Ascending aorta (tissue), 2 donors: ENCODE measurements at regions of chr11 and their contacts with region 1.

Region 1: DNA sequence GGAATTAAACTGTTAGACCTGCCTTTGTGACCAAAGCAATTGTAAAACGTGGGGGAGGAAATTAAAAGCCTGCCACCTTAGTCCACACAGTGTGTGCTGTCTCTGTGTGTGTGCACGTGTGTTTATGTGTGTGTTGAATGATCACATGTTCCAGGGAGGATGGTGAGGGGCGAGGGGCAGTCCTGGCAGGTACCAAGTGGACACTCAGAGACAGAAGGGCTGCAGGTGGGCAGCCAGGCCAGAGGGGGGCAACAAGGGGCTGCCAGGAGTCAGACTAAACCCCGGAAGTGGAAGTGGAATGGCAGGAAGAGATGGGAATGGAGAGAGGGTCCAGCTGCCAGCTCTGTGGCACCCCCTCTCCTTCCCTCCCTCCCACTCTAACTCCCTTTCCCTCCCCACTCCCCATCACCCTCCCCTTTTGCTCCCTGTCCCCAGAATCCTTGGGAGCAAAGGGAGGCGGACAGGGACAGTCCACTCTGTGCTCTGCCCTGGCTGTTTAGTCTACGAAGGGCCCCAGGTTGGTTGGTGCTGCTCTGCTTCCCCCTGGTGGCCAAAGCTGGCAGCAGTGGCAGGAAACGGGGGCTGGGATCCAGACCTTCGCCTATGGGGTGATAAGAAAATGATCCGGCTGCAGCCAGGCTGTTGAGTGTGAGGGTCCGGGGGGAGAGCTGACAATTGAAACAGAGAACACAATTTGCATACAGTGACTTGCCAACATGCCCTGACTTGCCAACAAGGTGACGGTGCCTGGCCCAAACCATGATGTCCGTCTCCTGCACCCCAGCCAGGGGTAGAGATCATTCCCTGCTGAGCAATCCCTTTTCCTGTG is 24.4 kb downstream of the P2RY2 start:
- DNase-seq: peak; percentile 47 to 87
- H3K4me3 ChIP-seq: peak overlapping the region in 1 of 2 donors; percentile 43
- H3K27ac ChIP-seq: peak overlapping the region in 1 of 2 donors; percentile 37
- H3K4me1 ChIP-seq: peaks cover 5 to 16% of the 10 kb centered on the region in 2 donors
- H3K27me3 ChIP-seq: no peaks in the 10 kb centered on the region
- CTCF ChIP-seq: peak; percentile 90 to 94 (median 91)

Region 2: GRCh38 chr11:72831513-72832300 is 410.8 kb before region 1 on chr11:
- intact Hi-C with region 1: loop called (anchors 1 kb)
- DNase-seq: peak in 1 of 2 donors; percentile 94
- H3K4me3 ChIP-seq: no peak overlapping the region
- H3K27ac ChIP-seq: peak overlapping the region; percentile 97 to 99
- H3K4me1 ChIP-seq: peaks cover 23 to 50% of the 10 kb centered on the region in 2 donors
- H3K27me3 ChIP-seq: no peaks in the 10 kb centered on the region
- CTCF ChIP-seq: peak; percentile 93 to 98 (median 93)

Region 3: GRCh38 chr11:72924568-72925190 is 317.8 kb before region 1 on chr11:
- intact Hi-C with region 1: loop called (anchors 1 kb)
- DNase-seq: no peak
- H3K4me3 ChIP-seq: no peak overlapping the region
- H3K27ac ChIP-seq: no peak overlapping the region
- H3K4me1 ChIP-seq: peaks cover 0 to 13% of the 10 kb centered on the region in 2 donors
- H3K27me3 ChIP-seq: no peaks in the 10 kb centered on the region
- CTCF ChIP-seq: peak; percentile 31 to 54 (median 37)

Region 4: GRCh38 chr11:73184953-73185671 is 57.4 kb before region 1 on chr11:
- intact Hi-C with region 1: loop called (anchors 1 kb)
- DNase-seq: peak in 1 of 2 donors; percentile 83
- H3K4me3 ChIP-seq: peak overlapping the region in 1 of 2 donors; percentile 11
- H3K27ac ChIP-seq: peak overlapping the region; percentile 69 to 77
- H3K4me1 ChIP-seq: peaks cover 16 to 18% of the 10 kb centered on the region in 2 donors
- H3K27me3 ChIP-seq: no peaks in the 10 kb centered on the region
- CTCF ChIP-seq: peak; percentile 82 to 84 (median 84)

Region 5: DNA sequence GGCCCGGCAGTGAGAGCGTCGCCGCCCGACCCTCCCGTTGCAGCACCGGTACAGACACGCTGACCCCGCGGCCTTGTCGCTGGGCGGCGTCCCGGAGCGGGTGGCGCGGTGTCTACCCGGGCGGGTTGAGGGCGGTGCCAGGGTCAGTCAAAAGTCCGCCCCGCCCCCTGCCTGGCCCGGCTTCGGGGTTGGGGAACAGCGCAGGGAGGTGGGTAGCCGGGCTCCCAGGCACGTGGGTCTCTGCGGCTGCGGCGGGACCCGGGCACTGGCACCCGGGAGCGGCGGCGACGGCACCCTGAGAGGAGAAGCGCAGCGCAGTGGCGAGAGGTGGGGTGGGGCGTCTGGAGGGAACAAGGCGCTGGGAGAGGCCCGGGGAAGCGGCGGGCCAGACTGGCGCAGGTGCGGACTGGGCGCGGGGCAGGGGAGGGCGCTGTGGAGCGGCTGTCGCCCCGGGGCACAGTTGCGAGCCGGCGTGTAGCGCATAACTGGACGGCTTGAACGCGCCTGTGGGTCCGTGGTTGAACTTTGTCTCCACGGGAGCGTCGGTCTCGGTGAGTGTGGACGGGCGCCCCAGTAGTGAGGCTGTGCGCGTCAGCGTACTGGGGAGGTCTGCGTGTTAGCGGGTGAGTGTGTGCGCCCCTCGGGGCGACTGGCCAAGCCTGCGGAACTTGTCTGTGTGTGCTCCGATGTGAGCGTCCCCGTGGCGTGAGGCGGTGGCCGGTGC is 24.2 kb before region 1 on chr11 and contains the start of gene P2RY2:
- intact Hi-C with region 1: loop called (anchors 2 kb)
- DNase-seq: peak; percentile 22 to 86
- H3K4me3 ChIP-seq: peak within 1 kb of the TSS; percentile 52 to 71
- H3K27ac ChIP-seq: peak within 1 kb of the TSS in 1 of 2 donors; percentile 11
- H3K4me1 ChIP-seq: peaks cover 2 to 3% of the 10 kb centered on the region in 2 donors
- H3K27me3 ChIP-seq: no peaks in the 10 kb centered on the region
- CTCF ChIP-seq: peak; percentile 66 to 74 (median 69)
- total RNA-seq, gene P2RY2: 18.3 TPM

Region 6: DNA sequence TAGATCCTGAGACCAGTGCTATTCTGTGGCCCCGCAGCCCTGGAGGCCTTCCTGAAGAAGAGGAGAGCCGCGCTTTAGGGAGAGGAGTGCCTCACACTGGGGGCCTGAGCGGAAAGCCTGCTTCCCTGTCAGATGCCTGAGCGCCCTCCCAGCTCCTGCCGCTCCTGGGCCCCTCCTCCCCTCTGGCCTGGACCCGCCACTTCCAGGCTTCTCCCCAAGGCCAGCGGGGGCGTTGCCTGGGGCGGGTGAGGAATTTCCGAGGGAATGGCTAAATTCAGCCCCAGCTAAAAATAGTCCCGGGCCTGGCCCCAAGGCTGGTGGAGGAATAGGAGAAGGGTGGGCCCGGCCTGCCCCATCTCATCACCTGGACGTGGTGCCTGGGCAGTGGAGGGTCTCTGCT is 81.0 kb after region 1 on chr11:
- intact Hi-C with region 1: no loop called
- DNase-seq: peak; percentile 72 to 98
- H3K4me3 ChIP-seq: peak overlapping the region; percentile 5 to 37
- H3K27ac ChIP-seq: peak overlapping the region; percentile 94 to 96
- H3K4me1 ChIP-seq: peaks cover 73 to 97% of the 10 kb centered on the region in 2 donors
- H3K27me3 ChIP-seq: no peaks in the 10 kb centered on the region
- CTCF ChIP-seq: no peak